ENCODE measurements at regions of chr20 and their contacts with region 1.

Region 1: GRCh38 chr20:46132705-46133120 is 14.6 kb downstream of the CD40 start:
- DNase-seq: no peak
- H3K4me3 ChIP-seq: no peak overlapping the region
- CTCF ChIP-seq: peak; percentile 95

Region 2: DNA sequence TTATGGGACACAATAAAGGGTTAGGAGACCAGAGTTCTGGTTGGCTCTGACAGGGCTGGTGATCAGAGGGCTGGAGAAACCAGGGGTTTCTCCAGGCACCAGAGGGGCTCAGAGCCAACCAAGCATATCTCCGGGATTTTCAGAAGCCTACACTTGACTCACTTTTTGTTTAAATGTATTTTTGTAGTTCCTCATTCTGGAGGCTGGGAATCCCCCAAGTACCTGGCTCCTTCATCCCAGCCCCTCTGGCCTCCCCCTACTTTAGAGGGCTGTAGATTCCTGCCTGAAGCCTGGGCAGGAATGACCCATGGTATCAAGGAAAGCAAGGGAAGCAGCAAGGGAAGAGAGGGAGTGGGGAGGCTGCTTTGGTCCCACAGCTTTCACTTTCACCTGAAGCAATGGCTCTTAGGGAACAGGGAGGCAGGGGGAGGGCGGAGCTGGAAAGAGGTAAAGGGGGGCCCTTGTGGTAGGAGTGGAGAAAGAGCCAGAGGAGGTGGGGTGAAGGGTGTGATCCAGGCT is 13.6 kb before region 1 on chr20:
- CTCF ChIA-PET with region 1: interaction called, 15 read pairs
- POLR2A ChIA-PET with region 1: no interaction called
- DNase-seq: no peak
- H3K4me3 ChIP-seq: no peak overlapping the region
- CTCF ChIP-seq: no peak

Region 3: GRCh38 chr20:46406199-46406985 is 273.7 kb after region 1 on chr20 and contains the start of gene ELMO2:
- CTCF ChIA-PET with region 1: interaction called, 10 read pairs
- POLR2A ChIA-PET with region 1: no interaction called
- DNase-seq: peak; percentile 75
- H3K4me3 ChIP-seq: peak within 1 kb of the TSS; percentile 90
- CTCF ChIP-seq: no peak

Region 4: DNA sequence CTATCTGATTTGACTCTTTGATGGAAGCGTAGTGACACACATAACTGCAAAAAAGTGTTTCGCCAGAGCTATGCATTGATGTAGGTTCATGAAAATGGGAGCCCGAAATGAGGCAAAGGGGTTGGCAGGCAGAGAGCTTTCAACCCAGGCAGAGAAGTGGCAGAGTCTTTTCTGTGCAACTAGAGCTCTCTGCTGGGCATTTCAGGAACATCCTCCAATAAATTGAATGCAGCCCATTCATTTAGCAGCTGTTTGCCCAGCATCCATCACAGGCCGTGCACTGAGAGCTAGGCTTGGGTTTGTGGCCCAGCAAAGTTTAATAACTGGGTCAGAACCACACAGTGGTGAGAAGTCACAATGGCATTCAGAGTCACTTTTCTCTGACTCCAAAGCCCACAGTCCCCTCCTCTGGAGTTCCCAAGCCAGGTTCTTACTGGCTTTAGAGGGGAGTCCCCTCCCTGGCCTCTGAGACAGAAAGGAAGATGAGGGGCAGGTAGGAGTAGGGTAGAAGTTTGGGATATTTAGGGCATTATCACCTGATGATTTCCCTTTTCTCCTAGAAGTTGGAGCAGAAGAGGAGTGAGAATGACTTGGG is 305.5 kb after region 1 on chr20:
- CTCF ChIA-PET with region 1: interaction called, 16 read pairs
- POLR2A ChIA-PET with region 1: no interaction called
- DNase-seq: no peak
- H3K4me3 ChIP-seq: no peak overlapping the region
- CTCF ChIP-seq: peak; percentile 42

Measured in AG04449 (cell line).